ENCODE measurements at regions of chr1 and their contacts with region 1.

Region 1: DNA sequence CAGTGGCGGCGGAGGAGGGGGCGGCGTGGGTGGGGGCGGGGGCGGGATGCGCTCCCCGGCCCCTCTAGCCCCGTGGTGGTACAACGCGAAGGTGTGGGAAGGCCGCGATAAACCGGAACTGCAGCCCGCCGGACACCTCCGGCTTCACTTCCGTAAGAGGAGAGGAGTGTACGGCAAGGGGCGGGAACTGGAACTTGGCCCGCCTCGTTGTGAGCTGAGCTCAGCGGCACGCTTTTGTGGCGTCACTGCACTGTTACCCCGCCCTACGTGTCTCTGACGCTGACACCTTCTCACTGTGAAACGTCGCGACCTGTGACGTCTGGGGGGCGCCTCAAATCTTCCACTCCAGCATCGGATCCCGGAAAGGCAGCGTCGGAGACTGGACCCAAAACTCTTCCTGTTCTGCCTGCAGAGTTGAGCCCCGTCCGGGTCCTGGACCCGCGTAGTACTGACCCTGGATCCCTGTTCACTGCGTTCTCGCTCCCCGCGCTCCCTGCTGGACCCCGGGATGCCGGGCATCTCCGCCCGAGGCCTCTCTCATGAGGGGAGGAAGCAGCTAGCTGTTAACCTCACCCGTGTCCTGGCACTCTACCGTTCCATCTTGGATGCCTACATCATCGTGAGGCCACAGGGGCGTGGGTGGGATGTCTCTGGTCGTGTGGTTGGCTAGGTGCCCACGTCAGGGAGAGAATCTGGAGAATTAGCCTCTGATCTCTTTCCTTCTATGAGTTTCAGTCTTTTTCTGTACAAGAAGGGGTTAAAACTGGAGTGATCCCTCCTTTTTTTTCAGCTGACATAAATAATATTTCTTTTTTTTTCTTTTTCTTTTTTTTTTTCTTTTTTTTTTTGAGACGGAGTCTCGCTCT is at the start of gene ISG20L2:
- DNase-seq: peak; percentile 95
- H3K4me3 ChIP-seq: peak within 1 kb of the TSS; percentile 87
- H3K27ac ChIP-seq: peak within 1 kb of the TSS; percentile 62
- H3K4me1 ChIP-seq: peaks cover 30% of the 10 kb centered on the region
- CTCF ChIP-seq: no peak
- total RNA-seq, gene ISG20L2: 36.5 and 37.9 TPM in 2 replicates

Region 2: GRCh38 chr1:156625436-156626078 is 103.3 kb before region 1 on chr1:
- CTCF ChIA-PET with region 1: interaction called, 4 read pairs
- POLR2A ChIA-PET with region 1: interaction called, 4 read pairs
- intact Hi-C with region 1: loop called (anchors 5 kb)
- DNase-seq: peak; percentile 68
- H3K4me3 ChIP-seq: no peak overlapping the region
- H3K27ac ChIP-seq: no peak overlapping the region
- H3K4me1 ChIP-seq: peaks cover 23% of the 10 kb centered on the region
- CTCF ChIP-seq: peak; percentile 93

Region 3: GRCh38 chr1:156689035-156689952 is 39.5 kb before region 1 on chr1:
- CTCF ChIA-PET with region 1: interaction called, 36 read pairs
- POLR2A ChIA-PET with region 1: interaction called, 3 read pairs
- intact Hi-C with region 1: loop called (anchors 1 kb)
- DNase-seq: peak; percentile 86
- H3K4me3 ChIP-seq: peak overlapping the region; percentile 18
- H3K27ac ChIP-seq: no peak overlapping the region
- H3K4me1 ChIP-seq: peaks cover 17% of the 10 kb centered on the region
- CTCF ChIP-seq: peak; percentile 81

Region 4: DNA sequence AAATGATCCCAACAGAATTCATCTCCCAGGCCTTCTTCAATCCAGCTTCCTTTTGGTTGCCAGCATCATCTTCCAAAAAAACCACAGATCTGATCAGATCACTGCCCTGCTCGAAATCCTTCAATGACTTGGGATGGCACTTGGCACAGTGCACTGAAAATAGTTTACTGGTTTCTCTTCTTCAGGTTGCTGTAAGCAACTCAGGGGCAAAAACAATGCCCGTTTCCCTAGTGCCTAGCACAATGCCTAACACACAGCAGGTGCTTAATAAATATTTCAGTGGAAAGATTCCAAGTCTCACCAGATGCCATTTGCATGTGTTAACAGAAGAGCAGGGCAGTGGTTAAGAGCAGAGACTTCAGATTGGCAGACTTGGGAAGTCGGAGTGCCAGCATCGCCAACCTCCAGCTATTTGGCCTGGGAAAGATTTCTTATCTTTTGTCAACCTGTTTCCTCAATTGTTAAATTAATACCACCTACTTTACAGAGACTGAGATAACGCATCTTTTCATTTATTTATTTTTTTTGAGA is 11.5 kb before region 1 on chr1:
- CTCF ChIA-PET with region 1: interaction called, 12 read pairs
- POLR2A ChIA-PET with region 1: no interaction called
- intact Hi-C with region 1: no loop called
- DNase-seq: no peak
- H3K4me3 ChIP-seq: no peak overlapping the region
- H3K27ac ChIP-seq: no peak overlapping the region
- H3K4me1 ChIP-seq: no peaks in the 10 kb centered on the region
- CTCF ChIP-seq: no peak

Region 5: GRCh38 chr1:156751758-156752757 is 23.2 kb after region 1 on chr1:
- CTCF ChIA-PET with region 1: interaction called, 9 read pairs
- POLR2A ChIA-PET with region 1: interaction called, 10 read pairs
- intact Hi-C with region 1: loop called (anchors 1 kb)
- DNase-seq: peak; percentile 97
- H3K4me3 ChIP-seq: peak overlapping the region; percentile 85
- H3K27ac ChIP-seq: peak overlapping the region; percentile 81
- H3K4me1 ChIP-seq: peaks cover 40% of the 10 kb centered on the region
- CTCF ChIP-seq: no peak

Region 6: GRCh38 chr1:156767101-156767878 is 38.5 kb after region 1 on chr1 and contains the start of gene PRCC:
- CTCF ChIA-PET with region 1: interaction called, 8 read pairs
- POLR2A ChIA-PET with region 1: interaction called, 6 read pairs
- intact Hi-C with region 1: loop called (anchors 1 kb)
- DNase-seq: peak; percentile 99
- H3K4me3 ChIP-seq: peak within 1 kb of the TSS; percentile 89
- H3K27ac ChIP-seq: peak within 1 kb of the TSS; percentile 64
- H3K4me1 ChIP-seq: peaks cover 24% of the 10 kb centered on the region
- CTCF ChIP-seq: no peak
- total RNA-seq, gene PRCC: 53.7 and 54.0 TPM in 2 replicates

Region 7: GRCh38 chr1:156860113-156860627 is 131.3 kb after region 1 on chr1:
- CTCF ChIA-PET with region 1: no interaction called
- POLR2A ChIA-PET with region 1: interaction called, 5 read pairs
- intact Hi-C with region 1: loop called (anchors 5 kb)
- DNase-seq: peak; percentile 63
- H3K4me3 ChIP-seq: peak overlapping the region; percentile 11
- H3K27ac ChIP-seq: no peak overlapping the region
- H3K4me1 ChIP-seq: peaks cover 4% of the 10 kb centered on the region
- CTCF ChIP-seq: peak; percentile 83

Region 8: DNA sequence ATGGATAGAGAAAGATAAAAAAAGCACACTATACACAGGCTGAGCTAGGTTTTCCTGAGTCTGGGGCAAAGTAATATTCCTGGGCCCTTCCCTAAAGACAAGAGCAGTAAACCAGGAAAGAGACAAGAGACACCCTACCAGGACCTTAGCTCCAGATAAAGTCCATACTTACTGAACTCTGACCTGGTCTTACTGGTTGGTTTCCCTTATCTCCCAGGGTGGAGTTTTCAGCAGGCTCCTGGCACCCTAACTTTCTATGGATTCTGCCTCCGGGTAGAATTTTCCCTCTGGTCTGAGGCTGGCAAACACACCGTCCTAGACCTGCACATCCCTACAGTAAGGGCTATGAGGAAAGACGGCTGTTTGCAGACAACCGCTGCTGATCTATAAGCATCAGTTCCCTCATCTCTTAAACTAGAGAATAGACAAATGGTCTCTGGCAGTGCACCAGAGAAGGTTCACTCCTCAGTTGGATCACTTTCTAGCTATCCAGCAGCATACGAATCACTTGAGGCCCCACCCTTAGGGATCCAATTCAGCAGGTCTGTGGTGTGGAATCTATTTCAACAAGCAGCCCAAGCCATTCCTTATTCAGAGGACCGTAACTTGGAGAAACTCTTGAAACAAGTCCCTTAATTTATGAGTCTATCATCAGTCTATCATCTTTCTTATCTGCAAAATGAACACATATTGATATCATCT is 264.8 kb after region 1 on chr1:
- CTCF ChIA-PET with region 1: no interaction called
- POLR2A ChIA-PET with region 1: no interaction called
- intact Hi-C with region 1: no loop called
- DNase-seq: no peak
- H3K4me3 ChIP-seq: no peak overlapping the region
- H3K27ac ChIP-seq: no peak overlapping the region
- H3K4me1 ChIP-seq: no peaks in the 10 kb centered on the region
- CTCF ChIP-seq: no peak